ENCODE measurements at regions of chr6 and their contacts with region 1.

Region 1: GRCh38 chr6:42142118-42142931 is at the start of gene C6orf132:
- DNase-seq: peak; percentile 86
- H3K4me3 ChIP-seq: peak within 1 kb of the TSS; percentile 64
- H3K27ac ChIP-seq: peak within 1 kb of the TSS; percentile 85
- H3K4me1 ChIP-seq: peaks cover 17% of the 10 kb centered on the region
- H3K27me3 ChIP-seq: peaks cover 6% of the 10 kb centered on the region
- CTCF ChIP-seq: no peak
- total RNA-seq, gene C6orf132: 35.1 to 42.3 TPM

Region 2: DNA sequence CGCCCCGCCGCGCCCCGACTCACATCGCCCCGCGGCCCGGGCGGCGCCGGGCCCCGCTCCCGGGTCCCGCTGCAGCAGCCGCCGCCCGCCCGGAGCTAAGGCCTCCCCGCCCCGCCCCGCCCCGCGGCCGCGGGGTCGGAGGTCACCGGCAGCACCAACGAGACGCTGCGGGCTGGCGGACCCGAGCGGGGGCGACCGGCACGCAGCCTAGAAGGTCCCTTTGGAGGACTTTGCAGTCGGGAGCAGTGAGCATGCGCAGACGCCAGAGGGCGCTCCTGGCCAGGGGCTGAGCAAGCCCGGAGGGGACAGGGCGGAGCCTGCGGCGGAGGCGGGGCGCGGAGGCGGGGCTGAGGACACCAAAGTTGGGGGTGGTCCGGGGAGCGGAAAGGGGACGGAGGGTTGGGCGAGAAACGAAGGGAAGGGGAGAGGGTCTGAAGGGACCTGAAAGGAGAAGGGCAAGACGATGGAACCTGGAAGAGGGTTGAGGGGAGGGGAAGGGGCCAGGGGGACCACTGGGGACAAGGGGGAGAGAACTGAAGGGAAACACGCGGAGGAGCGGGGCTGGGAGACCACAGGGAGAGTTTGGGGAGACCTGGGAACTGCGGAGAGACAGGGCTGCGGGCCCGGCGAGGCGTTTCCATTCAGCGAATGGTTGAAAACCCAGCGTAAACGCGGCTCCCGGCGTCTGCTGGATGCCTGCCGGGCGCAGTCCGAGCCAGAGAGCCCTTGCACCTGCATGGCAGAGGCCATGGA is 362.4 kb before region 1 on chr6 and contains the start of gene FRS3:
- intact Hi-C with region 1: no loop called
- DNase-seq: peak; percentile 100
- H3K4me3 ChIP-seq: peak within 1 kb of the TSS; percentile 54
- H3K27ac ChIP-seq: peak within 1 kb of the TSS; percentile 80
- H3K4me1 ChIP-seq: peaks cover 6% of the 10 kb centered on the region
- H3K27me3 ChIP-seq: no peaks in the 10 kb centered on the region
- CTCF ChIP-seq: peak; percentile 57
- total RNA-seq, gene FRS3: 2.7 to 3.4 TPM

Region 3: DNA sequence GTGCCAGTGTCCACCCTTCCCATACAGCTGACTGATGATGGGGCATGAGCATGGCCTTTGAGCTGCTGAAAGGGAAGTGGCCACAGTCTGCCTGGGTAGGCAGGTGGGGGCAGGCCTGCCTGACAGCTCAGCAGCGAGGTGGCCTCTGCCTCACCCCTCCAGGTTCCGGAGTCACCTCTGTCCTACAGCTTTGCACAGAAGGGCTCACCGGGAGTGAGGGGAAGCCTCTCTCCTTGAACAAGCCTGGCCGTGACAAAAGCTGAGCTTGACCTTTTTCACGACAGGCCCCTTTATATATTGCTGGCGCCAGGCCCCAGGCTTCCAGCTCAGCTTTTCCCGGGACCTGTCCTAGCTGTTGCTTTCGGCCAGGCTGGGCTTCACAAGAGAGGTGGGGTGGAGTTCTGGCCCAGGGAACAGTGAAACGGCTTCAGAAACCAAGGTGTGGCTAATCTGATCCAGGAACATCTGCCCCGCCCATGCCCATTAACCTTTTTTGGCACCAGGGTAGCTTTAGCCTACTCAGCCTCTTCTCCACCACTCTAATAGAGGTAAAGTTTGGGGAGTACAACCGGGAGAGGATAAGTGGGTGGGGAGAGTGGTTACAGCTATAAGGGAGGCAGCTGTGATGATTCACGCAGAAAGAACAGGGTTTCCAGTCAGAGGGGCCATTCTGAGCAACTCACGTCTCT is 42.8 kb before region 1 on chr6:
- intact Hi-C with region 1: loop called (anchors 5 kb)
- DNase-seq: peak; percentile 89
- H3K4me3 ChIP-seq: no peak overlapping the region
- H3K27ac ChIP-seq: peak overlapping the region; percentile 84
- H3K4me1 ChIP-seq: peaks cover 18% of the 10 kb centered on the region
- H3K27me3 ChIP-seq: no peaks in the 10 kb centered on the region
- CTCF ChIP-seq: no peak